HepG2 (cell line): ENCODE measurements at regions of chr6 and their contacts with region 1.

Region 1: GRCh38 chr6:26249957-26250697 is 114.9 kb upstream of the BTN3A2 start:
- DNase-seq: peak; percentile 58
- ATAC-seq: peak; percentile 84
- H3K4me3 ChIP-seq: peak overlapping the region; percentile 55 to 80 (median 60)
- H3K27ac ChIP-seq: peak overlapping the region; percentile 52
- H3K4me1 ChIP-seq: peaks cover 40% of the 10 kb centered on the region
- H3K27me3 ChIP-seq: peaks cover 2 to 37% of the 10 kb centered on the region in 2 experiments; a peak in 3 of 5 replicates
- CTCF ChIP-seq: peak; percentile 72
- EP300 ChIP-seq: 0 out of 4 replicates have a peak, but pooled peaks of 1 of the 2 experiments have one; percentile 22
- POLR2A ChIP-seq: peak in 1 of 2 experiments; percentile 72; a peak in 2 of 4 replicates
- RAD21 ChIP-seq: no peak

Region 2: DNA sequence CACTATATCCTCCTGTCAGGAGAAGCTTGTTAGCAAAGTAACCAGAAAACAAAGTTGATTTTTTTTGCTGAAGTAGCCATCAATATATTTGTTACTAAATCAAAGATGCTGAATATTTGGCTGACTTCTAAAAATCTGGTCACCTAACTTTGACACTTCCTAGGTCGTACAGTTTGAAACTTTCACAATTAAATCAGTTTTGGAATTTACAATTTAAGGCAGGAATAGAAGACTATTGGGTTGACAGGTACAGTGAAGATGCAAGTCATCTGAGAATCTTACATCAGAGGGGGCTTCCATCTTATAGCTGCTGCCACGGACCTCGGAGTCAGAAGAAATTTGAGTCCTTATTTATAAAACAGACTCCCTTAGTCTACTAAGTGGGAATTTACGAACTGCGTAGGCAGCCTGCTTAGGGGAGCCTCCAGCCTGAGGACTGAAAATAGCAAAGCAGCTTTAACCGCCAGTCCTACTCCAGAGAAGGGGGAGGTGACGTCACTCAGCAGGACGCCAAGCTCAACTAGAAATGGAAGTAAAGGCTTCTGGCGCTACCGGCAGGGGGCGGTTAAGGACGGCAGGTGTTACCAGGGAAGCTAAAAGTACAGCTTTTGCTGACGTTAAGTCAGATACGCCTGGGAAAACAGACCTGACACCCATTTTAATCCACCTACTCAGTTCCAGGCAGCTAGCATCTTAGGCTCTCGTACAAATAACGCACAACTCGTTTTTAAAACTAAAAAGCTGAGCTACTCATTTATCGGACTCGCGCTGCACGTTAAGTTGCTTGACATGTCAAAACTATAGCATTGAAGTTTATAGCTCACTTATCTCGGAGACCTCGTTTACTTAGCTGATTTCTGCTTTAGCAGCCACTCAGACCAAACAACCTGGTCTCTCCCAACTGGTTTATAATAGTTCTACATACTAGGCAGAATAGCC is 224.0 kb before region 1 on chr6:
- CTCF ChIA-PET with region 1: no interaction called
- POLR2A ChIA-PET with region 1: no interaction called
- in situ Hi-C with region 1: no loop called
- intact Hi-C with region 1: no loop called
- DNase-seq: peak; percentile 97
- ATAC-seq: peak; percentile 68
- H3K4me3 ChIP-seq: peak overlapping the region; percentile 59 to 80 (median 71)
- H3K27ac ChIP-seq: peak overlapping the region; percentile 93
- H3K4me1 ChIP-seq: peaks cover 62% of the 10 kb centered on the region
- H3K27me3 ChIP-seq: no peaks in the 10 kb centered on the region; a peak in 1 of 5 replicates
- CTCF ChIP-seq: peak; percentile 95
- EP300 ChIP-seq: peak in 1 of 2 experiments; percentile 54; a peak in 2 of 4 replicates
- POLR2A ChIP-seq: peak in 1 of 2 experiments; percentile 28; a peak in 1 of 4 replicates
- RAD21 ChIP-seq: peak; percentile 77

Region 3: GRCh38 chr6:26272171-26272637 is 22.1 kb after region 1 on chr6:
- CTCF ChIA-PET with region 1: no interaction called
- POLR2A ChIA-PET with region 1: interaction called, 20 read pairs
- in situ Hi-C with region 1: no loop called
- intact Hi-C with region 1: no loop called
- DNase-seq: no peak
- ATAC-seq: peak; percentile 81
- H3K4me3 ChIP-seq: peak overlapping the region; percentile 54 to 73 (median 63)
- H3K27ac ChIP-seq: no peak overlapping the region
- H3K4me1 ChIP-seq: peaks cover 47% of the 10 kb centered on the region
- H3K27me3 ChIP-seq: peaks cover 4 to 24% of the 10 kb centered on the region in 2 experiments; a peak in 2 of 5 replicates
- CTCF ChIP-seq: peak; percentile 54
- EP300 ChIP-seq: no peak
- POLR2A ChIP-seq: no peak
- RAD21 ChIP-seq: no peak